CD4-positive, alpha-beta memory T cell (primary cell): ENCODE measurements at regions of chrX and their contacts with region 1.

Region 1: GRCh38 chrX:9464435-9465371 is at the start of gene TBL1X:
- DNase-seq: peak; percentile 45 to 52 (median 49)
- H3K4me3 ChIP-seq: peak within 1 kb of the TSS in 1 of 2 donors; percentile 32
- H3K4me3 Mint-ChIP-seq: peak within 1 kb of the TSS; percentile 75 to 87 (median 82)
- H3K27ac ChIP-seq: peak within 1 kb of the TSS; percentile 56
- H3K27ac Mint-ChIP-seq: peak within 1 kb of the TSS; percentile 88 to 100 (median 93)
- H3K4me1 ChIP-seq: peaks cover 38% of the 10 kb centered on the region
- H3K4me1 Mint-ChIP-seq: peaks cover 21 to 54% (median 35%) of the 10 kb centered on the region in 4 donors
- H3K27me3 ChIP-seq: no peaks in the 10 kb centered on the region
- H3K27me3 Mint-ChIP-seq: peaks cover 0 to 4% of the 10 kb centered on the region in 2 donors
- total RNA-seq, gene TBL1X: 48.1 to 50.5 TPM

Region 2: GRCh38 chrX:8815464-8816065 is 649.1 kb before region 1 on chrX:
- CTCF ChIA-PET with region 1: no interaction called
- POLR2A ChIA-PET with region 1: no interaction called
- intact Hi-C with region 1: loop called (anchors 10 kb)
- DNase-seq: peak in 4 of 5 donors; percentile 18 to 40 (median 32)
- H3K4me3 ChIP-seq: no peak overlapping the region
- H3K4me3 Mint-ChIP-seq: no peak overlapping the region
- H3K27ac ChIP-seq: no peak overlapping the region
- H3K27ac Mint-ChIP-seq: no peak overlapping the region
- H3K4me1 ChIP-seq: no peaks in the 10 kb centered on the region
- H3K4me1 Mint-ChIP-seq: no peaks in the 10 kb centered on the region
- H3K27me3 ChIP-seq: no peaks in the 10 kb centered on the region
- H3K27me3 Mint-ChIP-seq: peaks cover 0 to 2% of the 10 kb centered on the region in 2 donors

Region 3: GRCh38 chrX:8988446-8988845 is 476.3 kb before region 1 on chrX:
- CTCF ChIA-PET with region 1: interaction called, 3 read pairs
- POLR2A ChIA-PET with region 1: interaction called, 8 read pairs
- intact Hi-C with region 1: loop called (anchors 5 kb)
- DNase-seq: peak in 2 of 5 donors; percentile 7 to 38
- H3K4me3 ChIP-seq: no peak overlapping the region
- H3K4me3 Mint-ChIP-seq: peak overlapping the region in 1 of 8 donors; percentile 56
- H3K27ac ChIP-seq: no peak overlapping the region
- H3K27ac Mint-ChIP-seq: peak overlapping the region; percentile 89 to 95 (median 93)
- H3K4me1 ChIP-seq: peaks cover 24% of the 10 kb centered on the region
- H3K4me1 Mint-ChIP-seq: peaks cover 12 to 30% (median 17%) of the 10 kb centered on the region in 4 donors
- H3K27me3 ChIP-seq: no peaks in the 10 kb centered on the region
- H3K27me3 Mint-ChIP-seq: no peaks in the 10 kb centered on the region

Region 4: DNA sequence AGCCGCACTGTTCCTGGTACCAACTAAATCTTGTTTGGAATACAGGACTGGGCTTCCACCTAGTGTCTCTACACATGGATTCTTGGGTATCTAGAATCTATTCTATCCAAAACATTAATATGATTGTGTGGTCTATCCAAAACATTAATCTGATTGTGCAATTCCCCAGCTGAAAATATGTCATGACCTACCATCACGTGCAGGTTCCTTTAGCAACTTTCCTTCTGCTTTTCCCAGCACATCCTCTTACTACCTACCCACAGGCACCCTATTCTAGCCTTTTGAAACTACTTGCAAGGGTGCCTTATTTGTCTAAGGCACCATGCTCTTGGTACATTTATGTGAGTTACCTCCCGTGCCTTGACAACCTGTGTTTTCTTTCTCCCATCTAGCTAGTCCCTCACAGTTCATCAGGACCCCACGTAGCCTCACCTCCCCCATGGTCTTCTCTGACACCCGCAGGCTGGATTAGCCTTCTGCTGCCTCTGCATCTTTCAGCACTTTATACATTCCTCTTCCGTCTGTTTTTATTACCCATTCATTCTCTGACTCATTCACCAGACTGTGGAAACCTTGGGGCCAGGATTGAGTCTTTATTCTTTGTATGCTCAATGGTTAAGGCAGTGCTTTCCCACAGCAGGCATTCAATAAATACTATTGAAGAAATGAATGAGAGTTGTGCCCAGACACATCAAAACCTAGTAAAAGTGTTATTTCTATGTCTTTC is 342.0 kb before region 1 on chrX:
- CTCF ChIA-PET with region 1: no interaction called
- POLR2A ChIA-PET with region 1: no interaction called
- intact Hi-C with region 1: no loop called
- DNase-seq: no peak
- H3K4me3 ChIP-seq: no peak overlapping the region
- H3K4me3 Mint-ChIP-seq: no peak overlapping the region
- H3K27ac ChIP-seq: no peak overlapping the region
- H3K27ac Mint-ChIP-seq: no peak overlapping the region
- H3K4me1 ChIP-seq: no peaks in the 10 kb centered on the region
- H3K4me1 Mint-ChIP-seq: no peaks in the 10 kb centered on the region
- H3K27me3 ChIP-seq: no peaks in the 10 kb centered on the region
- H3K27me3 Mint-ChIP-seq: peaks cover 0 to 3% of the 10 kb centered on the region in 2 donors

Region 5: GRCh38 chrX:9341291-9342201 is 123.2 kb before region 1 on chrX:
- CTCF ChIA-PET with region 1: interaction called, 23 read pairs
- POLR2A ChIA-PET with region 1: interaction called, 90 read pairs
- intact Hi-C with region 1: loop called (anchors 1 kb)
- DNase-seq: peak; percentile 64 to 77 (median 72)
- H3K4me3 ChIP-seq: peak overlapping the region; percentile 4 to 36
- H3K4me3 Mint-ChIP-seq: peak overlapping the region; percentile 77 to 89 (median 84)
- H3K27ac ChIP-seq: peak overlapping the region; percentile 58
- H3K27ac Mint-ChIP-seq: peak overlapping the region; percentile 94 to 98 (median 95)
- H3K4me1 ChIP-seq: peaks cover 51% of the 10 kb centered on the region
- H3K4me1 Mint-ChIP-seq: peaks cover 29 to 53% (median 40%) of the 10 kb centered on the region in 4 donors
- H3K27me3 ChIP-seq: no peaks in the 10 kb centered on the region
- H3K27me3 Mint-ChIP-seq: no peaks in the 10 kb centered on the region

Region 6: GRCh38 chrX:9494771-9495170 is 30.1 kb after region 1 on chrX:
- CTCF ChIA-PET with region 1: no interaction called
- POLR2A ChIA-PET with region 1: no interaction called
- intact Hi-C with region 1: no loop called
- DNase-seq: no peak
- H3K4me3 ChIP-seq: no peak overlapping the region
- H3K4me3 Mint-ChIP-seq: no peak overlapping the region
- H3K27ac ChIP-seq: no peak overlapping the region
- H3K27ac Mint-ChIP-seq: no peak overlapping the region
- H3K4me1 ChIP-seq: peaks cover 4% of the 10 kb centered on the region
- H3K4me1 Mint-ChIP-seq: peaks cover 9 to 19% (median 14%) of the 10 kb centered on the region in 4 donors
- H3K27me3 ChIP-seq: no peaks in the 10 kb centered on the region
- H3K27me3 Mint-ChIP-seq: no peaks in the 10 kb centered on the region

Region 7: DNA sequence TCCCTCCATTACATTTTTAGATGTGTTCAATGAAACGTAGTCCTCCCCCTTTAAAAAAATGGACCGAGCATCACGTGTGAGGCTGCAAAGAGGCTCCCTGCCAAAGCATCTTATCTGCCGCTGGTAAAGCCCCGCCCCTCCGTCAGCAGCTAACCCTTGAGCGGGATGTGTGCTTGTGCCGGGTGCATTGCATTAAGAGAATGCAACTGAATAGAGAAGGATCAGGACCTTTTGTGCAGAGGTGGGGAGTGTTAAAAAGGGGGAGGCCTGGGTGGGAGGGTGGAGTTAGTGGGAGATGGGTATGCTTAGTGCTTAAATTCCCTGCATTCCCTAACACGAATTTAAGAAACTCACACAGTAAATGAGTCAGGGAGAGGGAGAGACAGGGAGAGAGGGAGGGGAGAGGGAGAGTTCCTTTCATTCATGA is 66.2 kb after region 1 on chrX:
- CTCF ChIA-PET with region 1: no interaction called
- POLR2A ChIA-PET with region 1: no interaction called
- intact Hi-C with region 1: loop called (anchors 5 kb)
- DNase-seq: peak; percentile 47 to 81 (median 61)
- H3K4me3 ChIP-seq: no peak overlapping the region
- H3K4me3 Mint-ChIP-seq: peak overlapping the region; percentile 37 to 72 (median 63)
- H3K27ac ChIP-seq: no peak overlapping the region
- H3K27ac Mint-ChIP-seq: peak overlapping the region in 6 of 7 donors; percentile 8 to 91 (median 49)
- H3K4me1 ChIP-seq: peaks cover 26% of the 10 kb centered on the region
- H3K4me1 Mint-ChIP-seq: peaks cover 18 to 47% (median 36%) of the 10 kb centered on the region in 4 donors
- H3K27me3 ChIP-seq: no peaks in the 10 kb centered on the region
- H3K27me3 Mint-ChIP-seq: no peaks in the 10 kb centered on the region